ENCODE measurements at regions of chr3 and their contacts with region 1.

Region 1: GRCh38 chr3:49411968-49412631 is at the starts of genes RHOA and TCTA:
- DNase-seq: peak; percentile 99
- ATAC-seq: peak; percentile 95
- total RNA-seq, gene RHOA: 311 to 334 TPM
- total RNA-seq, gene TCTA: 15.2 to 19.1 TPM

Region 2: GRCh38 chr3:49358217-49358883 is 53.8 kb before region 1 on chr3 and contains the start of gene GPX1:
- intact Hi-C with region 1: loop called in 1 of 2 experiments (anchors 10 kb)
- DNase-seq: peak; percentile 98
- ATAC-seq: peak; percentile 95 to 97
- total RNA-seq, gene GPX1: 230 to 235 TPM

Region 3: DNA sequence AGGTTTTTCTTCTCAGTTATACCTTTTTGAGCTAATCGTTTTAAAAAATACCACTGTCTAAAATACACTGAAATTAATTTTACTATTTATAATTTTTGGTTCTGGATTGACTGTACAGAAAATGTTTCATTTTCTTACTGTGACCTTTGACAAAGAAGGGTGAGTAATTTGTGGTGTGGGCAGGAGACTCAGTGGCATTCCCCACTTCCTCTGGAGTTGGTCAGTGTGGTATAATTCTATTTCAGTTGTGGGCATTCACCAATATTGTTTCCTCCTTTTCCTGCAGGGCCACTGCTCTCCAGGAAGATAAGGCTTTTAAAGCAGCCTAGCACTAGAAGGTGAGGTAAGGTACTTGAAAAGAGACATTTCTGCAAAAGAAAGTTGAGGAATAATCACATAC is 64.5 kb after region 1 on chr3:
- intact Hi-C with region 1: no loop called
- DNase-seq: no peak
- ATAC-seq: no peak

Region 4: DNA sequence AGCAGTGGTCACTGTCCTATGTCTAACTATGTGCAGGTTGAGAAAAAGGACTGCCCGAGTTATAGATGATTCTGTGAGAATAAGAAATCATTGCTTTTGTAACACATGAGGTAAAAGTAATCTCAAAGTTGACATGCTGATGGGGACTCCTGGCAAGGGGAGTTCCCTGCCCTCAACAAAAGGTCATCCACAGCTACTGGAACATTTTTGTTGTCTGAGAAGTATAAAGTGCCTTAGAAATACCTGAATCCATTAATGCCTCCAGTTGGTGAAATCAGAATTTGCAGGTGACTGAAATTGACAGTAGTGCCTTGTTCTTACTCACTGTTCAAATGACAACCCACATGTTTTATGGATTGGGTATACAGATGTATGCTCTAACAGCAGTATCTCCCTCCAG is 632.9 kb after region 1 on chr3:
- intact Hi-C with region 1: no loop called
- DNase-seq: no peak
- ATAC-seq: no peak

Measured in left cardiac atrium (tissue), 4 donors.